Posterior vena cava (tissue), 2 donors: ENCODE measurements at regions of chr9 and their contacts with region 1.

Region 1: GRCh38 chr9:10212702-10213101 is 400.1 kb downstream of the PTPRD start:
- DNase-seq: no peak

Region 2: GRCh38 chr9:10855852-10856251 is 643.1 kb after region 1 on chr9:
- intact Hi-C with region 1: loop called in 1 of 2 experiments (anchors 10 kb)
- DNase-seq: no peak